Activated CD4-positive, alpha-beta memory T cell treated with anti-CD3 and anti-CD28 coated beads for 36 hours (primary cell): ENCODE measurements at regions of chr10 and their contacts with region 1.

Region 1: GRCh38 chr10:6507311-6507710 is 72.8 kb downstream of the PRKCQ start:
- DNase-seq: peak; percentile 73
- H3K4me3 Mint-ChIP-seq: no peak overlapping the region
- H3K27ac Mint-ChIP-seq: peak overlapping the region; percentile 88
- H3K4me1 Mint-ChIP-seq: peaks cover 76% of the 10 kb centered on the region
- H3K27me3 Mint-ChIP-seq: no peaks in the 10 kb centered on the region

Region 2: GRCh38 chr10:6563075-6563474 is 55.8 kb after region 1 on chr10:
- CTCF ChIA-PET with region 1: interaction called, 3 read pairs
- POLR2A ChIA-PET with region 1: no interaction called
- intact Hi-C with region 1: loop called (anchors 2 kb)
- DNase-seq: peak; percentile 86
- H3K4me3 Mint-ChIP-seq: peak overlapping the region; percentile 72
- H3K27ac Mint-ChIP-seq: peak overlapping the region; percentile 91
- H3K4me1 Mint-ChIP-seq: peaks cover 88% of the 10 kb centered on the region
- H3K27me3 Mint-ChIP-seq: no peaks in the 10 kb centered on the region